ENCODE measurements at regions of chr6 and their contacts with region 1.

Region 1: DNA sequence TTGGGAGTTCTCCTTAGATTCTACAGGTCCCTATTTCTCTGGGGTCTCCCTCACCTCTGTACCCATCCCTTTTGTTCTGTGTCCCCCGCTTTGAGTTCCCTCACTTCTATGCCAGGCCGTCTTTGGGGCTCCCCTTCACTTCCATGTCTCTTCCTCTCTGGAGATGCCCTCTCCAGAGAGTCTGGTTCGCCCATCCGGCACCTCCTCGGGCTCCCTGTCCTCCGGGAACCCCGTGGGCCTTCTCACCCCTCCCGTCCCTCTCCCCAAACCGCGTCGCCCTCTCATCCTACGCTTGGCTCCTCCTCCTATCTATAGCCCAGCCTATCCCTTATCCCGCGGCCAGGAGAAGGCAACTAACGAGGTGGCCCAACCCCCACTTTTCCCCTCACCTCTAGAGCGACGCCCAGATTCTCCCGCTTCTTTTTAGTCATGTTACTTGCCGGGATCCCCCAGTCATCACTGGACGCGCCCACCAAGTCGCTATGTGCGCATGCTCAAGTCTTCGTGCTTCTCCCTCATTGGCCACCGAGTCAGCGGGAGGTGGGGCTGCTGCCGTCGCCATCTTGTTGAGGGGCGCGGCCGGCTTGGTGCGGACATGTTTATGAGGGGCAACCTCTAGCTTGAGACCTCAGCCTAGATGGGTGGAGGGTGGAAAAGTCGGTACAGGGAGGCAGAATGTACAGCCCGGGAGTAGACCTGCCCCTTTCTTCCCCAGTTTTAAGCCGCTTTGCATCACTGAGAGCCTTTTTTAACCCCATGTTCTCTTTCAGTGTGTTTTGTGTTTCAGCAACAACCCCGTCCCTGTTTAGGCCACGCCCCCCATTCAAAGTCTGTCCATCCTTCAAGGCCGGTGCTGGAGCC is at the start of gene CCDC167:
- DNase-seq: peak; percentile 96
- ATAC-seq: peak; percentile 91
- H3K4me3 ChIP-seq: peak within 1 kb of the TSS; percentile 70 to 100 (median 93)
- H3K4me3 Mint-ChIP-seq: peak within 1 kb of the TSS; percentile 95
- H3K27ac ChIP-seq: peak within 1 kb of the TSS; percentile 69 to 90
- H3K27ac Mint-ChIP-seq: peak within 1 kb of the TSS; percentile 88
- H3K4me1 ChIP-seq: peaks cover 46 to 67% of the 10 kb centered on the region in 2 donors
- H3K4me1 Mint-ChIP-seq: peaks cover 67% of the 10 kb centered on the region
- H3K27me3 ChIP-seq: no peaks in the 10 kb centered on the region
- H3K27me3 Mint-ChIP-seq: no peaks in the 10 kb centered on the region
- CTCF ChIP-seq: no peak
- total RNA-seq, gene CCDC167: 9.7 and 11.1 TPM in 2 replicates

Region 2: GRCh38 chr6:37516076-37516919 is 16.6 kb after region 1 on chr6:
- CTCF ChIA-PET with region 1: interaction called, 3 read pairs
- POLR2A ChIA-PET with region 1: no interaction called
- intact Hi-C with region 1: loop called (anchors 2 kb)
- DNase-seq: peak; percentile 73
- ATAC-seq: peak; percentile 82
- H3K4me3 ChIP-seq: peak overlapping the region in 2 of 5 experiments; percentile 5 to 29
- H3K4me3 Mint-ChIP-seq: peak overlapping the region; percentile 49
- H3K27ac ChIP-seq: peak overlapping the region; percentile 7 to 51
- H3K27ac Mint-ChIP-seq: peak overlapping the region; percentile 80
- H3K4me1 ChIP-seq: peaks cover 23 to 35% of the 10 kb centered on the region in 2 donors
- H3K4me1 Mint-ChIP-seq: peaks cover 26% of the 10 kb centered on the region
- H3K27me3 ChIP-seq: peaks cover 0 to 9% (median 0%) of the 10 kb centered on the region in 4 experiments
- H3K27me3 Mint-ChIP-seq: peaks cover 4% of the 10 kb centered on the region
- CTCF ChIP-seq: no peak

Region 3: GRCh38 chr6:37559501-37559900 is 59.8 kb after region 1 on chr6:
- CTCF ChIA-PET with region 1: interaction called, 6 read pairs
- POLR2A ChIA-PET with region 1: interaction called, 4 read pairs
- intact Hi-C with region 1: loop called (anchors 5 kb)
- DNase-seq: no peak
- ATAC-seq: no peak
- H3K4me3 ChIP-seq: no peak overlapping the region
- H3K4me3 Mint-ChIP-seq: peak overlapping the region; percentile 2
- H3K27ac ChIP-seq: peak overlapping the region; percentile 37 to 94
- H3K27ac Mint-ChIP-seq: peak overlapping the region; percentile 57
- H3K4me1 ChIP-seq: peaks cover 99 to 100% of the 10 kb centered on the region in 2 donors
- H3K4me1 Mint-ChIP-seq: peaks cover 100% of the 10 kb centered on the region
- H3K27me3 ChIP-seq: no peaks in the 10 kb centered on the region
- H3K27me3 Mint-ChIP-seq: no peaks in the 10 kb centered on the region
- CTCF ChIP-seq: no peak

Region 4: GRCh38 chr6:37705239-37706051 is 205.8 kb after region 1 on chr6:
- CTCF ChIA-PET with region 1: interaction called, 3 read pairs
- POLR2A ChIA-PET with region 1: no interaction called
- intact Hi-C with region 1: loop called (anchors 2 kb)
- DNase-seq: peak; percentile 87
- ATAC-seq: peak; percentile 88
- H3K4me3 ChIP-seq: peak overlapping the region; percentile 3 to 69 (median 53)
- H3K4me3 Mint-ChIP-seq: peak overlapping the region; percentile 91
- H3K27ac ChIP-seq: peak overlapping the region; percentile 39 to 65
- H3K27ac Mint-ChIP-seq: peak overlapping the region; percentile 86
- H3K4me1 ChIP-seq: peaks cover 5 to 22% of the 10 kb centered on the region in 2 donors
- H3K4me1 Mint-ChIP-seq: peaks cover 26% of the 10 kb centered on the region
- H3K27me3 ChIP-seq: peaks cover 0 to 4% (median 0%) of the 10 kb centered on the region in 4 experiments
- H3K27me3 Mint-ChIP-seq: no peaks in the 10 kb centered on the region
- CTCF ChIP-seq: peak; percentile 83

Measured in B cell (primary cell).